ENCODE measurements at regions of chr12 and their contacts with region 1.

Region 1: GRCh38 chr12:49740930-49741881 is at the start of gene TMBIM6:
- H3K4me3 ChIP-seq: peak within 1 kb of the TSS; percentile 74
- H3K27ac ChIP-seq: peak within 1 kb of the TSS; percentile 92
- H3K4me1 ChIP-seq: peaks cover 11% of the 10 kb centered on the region
- CTCF ChIP-seq: peak; percentile 94

Region 2: GRCh38 chr12:49557917-49558215 is 183.3 kb before region 1 on chr12:
- CTCF ChIA-PET with region 1: no interaction called
- POLR2A ChIA-PET with region 1: no interaction called
- H3K4me3 ChIP-seq: no peak overlapping the region
- H3K27ac ChIP-seq: no peak overlapping the region
- H3K4me1 ChIP-seq: no peaks in the 10 kb centered on the region
- CTCF ChIP-seq: peak; percentile 65

Region 3: GRCh38 chr12:49707128-49707811 is 33.9 kb before region 1 on chr12 and contains the start of gene FMNL3:
- CTCF ChIA-PET with region 1: interaction called, 12 read pairs
- POLR2A ChIA-PET with region 1: interaction called, 6 read pairs
- H3K4me3 ChIP-seq: peak within 1 kb of the TSS; percentile 65
- H3K27ac ChIP-seq: peak within 1 kb of the TSS; percentile 89
- H3K4me1 ChIP-seq: peaks cover 5% of the 10 kb centered on the region
- CTCF ChIP-seq: peak; percentile 96

Region 4: DNA sequence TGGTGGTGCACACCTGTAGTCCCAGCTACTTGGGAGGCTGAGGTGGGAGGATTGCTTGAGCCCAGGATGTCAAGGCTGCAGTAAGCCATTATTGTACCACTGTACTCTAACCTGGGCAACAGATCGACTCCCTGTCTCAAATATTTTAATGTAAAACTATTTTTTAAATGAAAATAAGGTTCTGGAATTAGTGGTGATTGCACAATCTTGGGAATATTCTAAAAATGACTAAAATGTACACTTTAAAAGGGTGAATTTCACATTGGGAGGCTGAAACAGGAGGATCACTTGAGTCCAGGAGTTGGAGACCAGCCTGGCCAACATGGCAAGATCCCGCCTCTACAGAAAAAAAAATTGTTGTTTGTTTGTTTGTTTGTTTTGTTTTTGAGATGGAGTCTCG is 12.8 kb before region 1 on chr12:
- CTCF ChIA-PET with region 1: interaction called, 8 read pairs
- POLR2A ChIA-PET with region 1: interaction called, 10 read pairs
- H3K4me3 ChIP-seq: no peak overlapping the region
- H3K27ac ChIP-seq: no peak overlapping the region
- H3K4me1 ChIP-seq: no peaks in the 10 kb centered on the region
- CTCF ChIP-seq: no peak

Region 5: GRCh38 chr12:49776413-49776812 is 35.2 kb after region 1 on chr12:
- CTCF ChIA-PET with region 1: interaction called, 14 read pairs
- POLR2A ChIA-PET with region 1: interaction called, 7 read pairs
- H3K4me3 ChIP-seq: no peak overlapping the region
- H3K27ac ChIP-seq: no peak overlapping the region
- H3K4me1 ChIP-seq: no peaks in the 10 kb centered on the region
- CTCF ChIP-seq: peak; percentile 97

Region 6: GRCh38 chr12:49842519-49843352 is 101.5 kb after region 1 on chr12 and contains the start of gene BCDIN3D:
- CTCF ChIA-PET with region 1: interaction called, 7 read pairs
- POLR2A ChIA-PET with region 1: interaction called, 10 read pairs
- H3K4me3 ChIP-seq: peak within 1 kb of the TSS; percentile 60
- H3K27ac ChIP-seq: peak within 1 kb of the TSS; percentile 89
- H3K4me1 ChIP-seq: peaks cover 6% of the 10 kb centered on the region; the same call in 1 of the 2 replicates
- CTCF ChIP-seq: no peak